CD4-positive, alpha-beta T cell (primary cell): ENCODE measurements at regions of chr1 and their contacts with region 1.

Region 1: DNA sequence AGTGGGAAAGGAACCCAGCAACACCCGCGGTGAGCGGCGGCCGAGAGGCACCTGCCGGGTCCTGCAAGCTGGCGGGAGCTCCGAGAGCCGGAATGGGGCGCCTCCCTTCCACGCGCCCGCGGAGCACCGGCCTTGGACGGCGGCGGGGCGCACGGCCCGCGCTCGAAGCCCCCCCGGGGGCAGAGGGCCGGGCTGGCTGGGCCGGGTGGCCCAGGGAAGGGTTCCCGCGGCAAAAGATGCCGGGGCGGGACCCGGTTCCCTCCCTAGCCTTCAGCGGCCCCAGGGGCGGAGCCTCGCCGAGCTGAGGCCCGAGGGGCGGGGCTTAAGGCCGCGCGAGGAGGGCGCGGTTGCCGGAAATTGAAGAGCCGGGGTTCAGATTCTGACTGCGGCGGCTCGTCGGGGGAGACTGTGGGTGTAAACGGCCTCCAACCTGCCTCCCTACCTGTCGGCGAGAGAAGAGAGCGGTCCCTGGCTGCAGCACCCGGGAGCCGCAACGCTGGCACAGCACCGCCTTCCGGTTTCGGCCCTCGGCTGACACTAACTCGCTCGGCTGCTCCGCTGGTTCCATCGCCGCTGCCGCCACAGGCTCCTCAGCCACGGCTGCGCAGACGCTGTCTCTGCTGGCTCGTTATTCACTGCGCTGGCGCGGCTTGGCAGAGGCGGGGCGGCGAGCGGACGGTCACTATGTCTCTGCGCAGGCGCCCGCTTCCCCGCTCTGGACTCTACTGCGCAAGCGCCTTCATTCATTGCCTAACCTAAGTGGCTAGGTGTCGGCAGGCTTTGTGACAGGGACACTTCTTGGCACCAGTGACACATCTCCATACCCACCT is at the start of gene RABIF:
- DNase-seq: peak; percentile 94 to 99 (median 96)
- ATAC-seq: peak; percentile 90
- H3K4me3 ChIP-seq: peak within 1 kb of the TSS; percentile 77
- H3K4me3 Mint-ChIP-seq: peak within 1 kb of the TSS; percentile 99
- H3K27ac ChIP-seq: peak within 1 kb of the TSS; percentile 87 to 95
- H3K27ac Mint-ChIP-seq: peak within 1 kb of the TSS; percentile 94
- H3K4me1 ChIP-seq: peaks cover 20% of the 10 kb centered on the region
- H3K4me1 Mint-ChIP-seq: peaks cover 24% of the 10 kb centered on the region
- H3K27me3 ChIP-seq: no peaks in the 10 kb centered on the region
- H3K27me3 Mint-ChIP-seq: no peaks in the 10 kb centered on the region
- CTCF ChIP-seq: peak; percentile 16
- total RNA-seq, gene RABIF: 9.1 to 9.2 TPM

Region 2: DNA sequence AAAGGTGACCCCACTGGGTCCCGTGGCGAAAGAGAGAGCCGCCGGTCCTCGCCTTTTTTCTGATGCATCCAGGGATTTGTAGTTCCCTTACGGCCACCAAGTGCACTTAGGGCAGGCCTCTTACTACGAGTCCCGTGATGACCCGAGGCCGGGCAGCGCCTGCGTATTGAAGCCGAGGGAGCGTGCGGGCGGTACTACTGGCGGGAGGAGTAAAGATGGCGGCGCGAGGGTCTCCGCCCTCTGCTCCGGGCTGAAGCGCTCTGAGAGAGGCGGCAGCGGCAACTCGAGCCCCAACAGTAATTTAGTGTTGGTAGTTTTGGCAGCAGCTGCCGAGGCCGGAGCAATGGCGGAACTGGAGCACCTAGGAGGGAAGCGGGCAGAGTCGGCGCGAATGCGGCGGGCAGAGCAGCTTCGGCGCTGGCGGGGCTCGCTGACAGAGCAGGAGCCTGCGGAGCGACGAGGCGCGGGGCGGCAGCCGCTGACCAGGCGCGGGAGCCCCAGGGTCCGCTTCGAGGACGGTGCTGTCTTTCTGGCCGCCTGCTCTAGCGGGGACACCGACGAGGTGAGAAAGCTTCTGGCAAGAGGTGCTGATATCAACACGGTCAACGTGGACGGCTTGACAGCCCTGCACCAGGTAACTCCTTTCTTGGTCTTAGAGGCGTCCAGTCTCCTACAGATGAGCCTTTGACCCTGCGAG is 540.1 kb before region 1 on chr1 and contains the start of gene PPP1R12B:
- CTCF ChIA-PET with region 1: no interaction called
- POLR2A ChIA-PET with region 1: no interaction called
- intact Hi-C with region 1: loop called in 1 of 2 experiments (anchors 2 kb)
- DNase-seq: peak; percentile 90 to 98 (median 94)
- ATAC-seq: peak; percentile 96
- H3K4me3 ChIP-seq: peak within 1 kb of the TSS; percentile 91
- H3K4me3 Mint-ChIP-seq: peak within 1 kb of the TSS; percentile 92
- H3K27ac ChIP-seq: peak within 1 kb of the TSS; percentile 70 to 77
- H3K27ac Mint-ChIP-seq: peak within 1 kb of the TSS; percentile 87
- H3K4me1 ChIP-seq: peaks cover 7% of the 10 kb centered on the region
- H3K4me1 Mint-ChIP-seq: peaks cover 33% of the 10 kb centered on the region
- H3K27me3 ChIP-seq: no peaks in the 10 kb centered on the region
- H3K27me3 Mint-ChIP-seq: no peaks in the 10 kb centered on the region
- CTCF ChIP-seq: no peak
- total RNA-seq, gene PPP1R12B: 15.0 to 15.3 TPM

Region 3: DNA sequence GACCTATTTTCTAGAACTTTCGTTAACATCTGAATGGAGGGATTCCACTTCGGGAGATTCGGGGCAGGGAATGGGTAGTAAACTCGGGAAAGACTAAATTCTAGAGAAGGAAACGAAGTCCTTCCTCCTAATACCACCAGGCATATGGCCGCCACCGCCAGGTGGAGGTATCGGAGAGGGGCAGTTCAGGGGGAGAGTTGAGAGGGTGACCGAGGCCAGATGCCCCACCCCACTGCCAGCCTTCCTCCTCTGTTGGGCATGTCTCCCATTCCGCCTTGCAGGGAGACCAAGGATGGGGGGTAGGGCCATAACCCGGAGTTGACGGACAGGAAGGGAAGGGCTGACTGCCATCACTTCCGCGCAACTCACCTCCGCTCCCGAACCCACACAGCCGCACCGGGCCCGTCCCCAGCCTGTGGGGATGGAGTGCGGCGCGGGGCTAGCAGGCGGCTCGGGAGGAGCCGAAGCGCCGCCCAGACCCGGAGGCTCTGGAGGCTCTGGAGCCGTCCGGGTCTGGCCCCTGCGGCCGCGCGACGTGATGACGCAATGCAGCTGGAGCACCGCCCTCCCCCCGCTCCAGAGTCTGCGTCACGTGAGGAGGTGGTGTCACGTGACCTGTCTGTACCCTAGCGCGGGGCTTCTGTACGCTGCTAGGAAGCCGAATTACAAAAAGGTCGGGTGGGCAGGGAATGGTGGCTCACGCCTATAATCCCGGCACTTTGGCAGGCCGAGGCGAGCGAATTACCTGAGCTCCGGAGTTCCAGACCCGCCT is 38.2 kb after region 1 on chr1 and contains the start of gene KLHL12:
- CTCF ChIA-PET with region 1: interaction called, 3 read pairs
- POLR2A ChIA-PET with region 1: interaction called, 9 read pairs
- intact Hi-C with region 1: loop called in 1 of 2 experiments (anchors 2 kb)
- DNase-seq: peak; percentile 89 to 97 (median 92)
- ATAC-seq: peak; percentile 92
- H3K4me3 ChIP-seq: peak within 1 kb of the TSS; percentile 93
- H3K4me3 Mint-ChIP-seq: peak within 1 kb of the TSS; percentile 98
- H3K27ac ChIP-seq: peak within 1 kb of the TSS; percentile 88 to 89
- H3K27ac Mint-ChIP-seq: peak within 1 kb of the TSS; percentile 98
- H3K4me1 ChIP-seq: peaks cover 14% of the 10 kb centered on the region
- H3K4me1 Mint-ChIP-seq: peaks cover 41% of the 10 kb centered on the region
- H3K27me3 ChIP-seq: no peaks in the 10 kb centered on the region
- H3K27me3 Mint-ChIP-seq: no peaks in the 10 kb centered on the region
- CTCF ChIP-seq: peak; percentile 69
- total RNA-seq, gene KLHL12: 18.5 to 18.6 TPM

Region 4: DNA sequence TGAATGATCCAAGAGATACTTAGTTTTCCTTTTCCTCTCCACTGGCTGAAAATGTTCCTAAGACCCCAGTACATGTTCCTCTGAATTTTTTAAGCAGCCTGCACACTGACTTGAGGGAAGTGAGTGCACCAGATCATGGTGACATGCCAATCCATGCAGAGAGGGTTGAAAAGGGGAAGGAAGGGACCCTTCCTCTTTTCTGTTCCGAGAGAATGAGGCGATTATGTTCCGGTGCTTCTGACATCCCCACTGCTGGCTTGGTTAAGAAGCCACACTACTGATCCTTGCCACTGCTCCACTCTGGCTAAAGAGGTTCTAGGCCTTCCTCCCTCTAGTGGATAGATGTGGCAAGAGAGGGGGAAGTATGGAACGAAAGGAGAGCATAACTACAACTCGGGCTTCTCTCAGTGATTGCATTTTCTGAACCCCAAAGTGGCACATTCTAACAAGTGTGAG is 80.1 kb after region 1 on chr1:
- CTCF ChIA-PET with region 1: no interaction called
- POLR2A ChIA-PET with region 1: interaction called, 11 read pairs
- intact Hi-C with region 1: loop called (anchors 2 kb)
- DNase-seq: peak in 8 of 14 experiments; percentile 5 to 78 (median 24)
- ATAC-seq: peak; percentile 45
- H3K4me3 ChIP-seq: no peak overlapping the region
- H3K4me3 Mint-ChIP-seq: peak overlapping the region; percentile 94
- H3K27ac ChIP-seq: no peak overlapping the region
- H3K27ac Mint-ChIP-seq: peak overlapping the region; percentile 90
- H3K4me1 ChIP-seq: peaks cover 36% of the 10 kb centered on the region
- H3K4me1 Mint-ChIP-seq: peaks cover 27% of the 10 kb centered on the region
- H3K27me3 ChIP-seq: no peaks in the 10 kb centered on the region
- H3K27me3 Mint-ChIP-seq: no peaks in the 10 kb centered on the region
- CTCF ChIP-seq: peak; percentile 47

Region 5: GRCh38 chr1:203117611-203118575 is 229.1 kb after region 1 on chr1:
- CTCF ChIA-PET with region 1: no interaction called
- POLR2A ChIA-PET with region 1: no interaction called
- intact Hi-C with region 1: no loop called
- DNase-seq: peak in 5 of 14 experiments; percentile 8 to 46 (median 19)
- ATAC-seq: no peak
- H3K4me3 ChIP-seq: no peak overlapping the region
- H3K4me3 Mint-ChIP-seq: no peak overlapping the region
- H3K27ac ChIP-seq: no peak overlapping the region
- H3K27ac Mint-ChIP-seq: no peak overlapping the region
- H3K4me1 ChIP-seq: no peaks in the 10 kb centered on the region
- H3K4me1 Mint-ChIP-seq: peaks cover 5% of the 10 kb centered on the region
- H3K27me3 ChIP-seq: peaks cover 25 to 44% of the 10 kb centered on the region in 2 experiments
- H3K27me3 Mint-ChIP-seq: peaks cover 53% of the 10 kb centered on the region
- CTCF ChIP-seq: no peak